AG04449 (cell line): ENCODE measurements at regions of chr21 and their contacts with region 1.

Region 1: GRCh38 chr21:46028573-46029091 is 47.1 kb downstream of the COL6A1 start:
- DNase-seq: no peak
- H3K4me3 ChIP-seq: no peak overlapping the region
- CTCF ChIP-seq: no peak

Region 2: GRCh38 chr21:46038871-46039397 is 10.3 kb after region 1 on chr21:
- CTCF ChIA-PET with region 1: interaction called, 12 read pairs
- POLR2A ChIA-PET with region 1: no interaction called
- DNase-seq: no peak
- H3K4me3 ChIP-seq: no peak overlapping the region
- CTCF ChIP-seq: no peak